Panc1 (cell line): ENCODE measurements at regions of chr3 and their contacts with region 1.

Region 1: GRCh38 chr3:133943639-133944141 is 48.0 kb upstream of the RAB6B start:
- DNase-seq: peak; percentile 54
- ATAC-seq: peak; percentile 82
- H3K4me3 ChIP-seq: no peak overlapping the region
- H3K27ac ChIP-seq: peak overlapping the region; percentile 79
- H3K4me1 ChIP-seq: peaks cover 62% of the 10 kb centered on the region
- H3K27me3 ChIP-seq: no peaks in the 10 kb centered on the region
- CTCF ChIP-seq: no peak

Region 2: DNA sequence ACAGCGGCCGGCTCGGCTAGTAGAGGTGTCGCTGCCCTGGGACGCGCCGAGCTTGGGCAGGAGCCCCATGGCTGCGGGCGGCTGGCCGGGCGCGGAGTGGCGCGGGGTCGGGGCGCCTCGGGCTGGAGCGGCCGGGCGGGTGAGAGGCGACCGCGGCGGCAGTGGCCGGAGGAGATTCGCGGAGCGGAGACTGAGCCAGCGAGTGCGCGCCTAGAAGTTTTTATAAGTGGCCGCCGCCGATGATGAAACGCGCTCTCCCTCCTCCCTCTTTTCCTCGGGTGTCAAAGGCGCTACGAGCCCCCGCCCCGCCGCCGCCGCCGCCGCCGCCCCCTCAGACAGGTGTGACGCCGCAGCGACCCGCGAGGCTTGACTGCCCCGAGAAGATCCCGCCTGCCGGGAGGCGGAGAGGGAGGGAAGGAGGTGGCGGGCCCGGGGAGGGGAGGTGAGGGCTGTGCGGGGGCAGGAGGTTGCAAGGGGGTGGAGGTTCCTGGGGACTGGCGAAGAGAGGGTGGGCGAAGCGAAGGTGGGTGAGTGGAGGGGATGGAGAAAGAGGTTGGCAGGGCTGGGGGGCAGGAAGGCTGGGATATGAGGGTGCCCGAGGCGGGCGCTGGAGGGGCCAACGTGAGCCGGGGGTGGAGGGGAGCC is 86.2 kb after region 1 on chr3 and contains the start of gene SLCO2A1:
- CTCF ChIA-PET with region 1: interaction called, 3 read pairs
- POLR2A ChIA-PET with region 1: no interaction called
- in situ Hi-C with region 1: no loop called
- intact Hi-C with region 1: loop called (anchors 5 kb)
- DNase-seq: no peak
- ATAC-seq: peak; percentile 76
- H3K4me3 ChIP-seq: peak within 1 kb of the TSS; percentile 52 to 54
- H3K27ac ChIP-seq: no peak within 1 kb of the TSS
- H3K4me1 ChIP-seq: no peaks in the 10 kb centered on the region
- H3K27me3 ChIP-seq: peaks cover 6% of the 10 kb centered on the region; the same call in 1 of the 2 replicates
- CTCF ChIP-seq: no peak
- total RNA-seq, gene SLCO2A1: 0.62 TPM